ENCODE measurements at regions of chr9 and their contacts with region 1.

Region 1: DNA sequence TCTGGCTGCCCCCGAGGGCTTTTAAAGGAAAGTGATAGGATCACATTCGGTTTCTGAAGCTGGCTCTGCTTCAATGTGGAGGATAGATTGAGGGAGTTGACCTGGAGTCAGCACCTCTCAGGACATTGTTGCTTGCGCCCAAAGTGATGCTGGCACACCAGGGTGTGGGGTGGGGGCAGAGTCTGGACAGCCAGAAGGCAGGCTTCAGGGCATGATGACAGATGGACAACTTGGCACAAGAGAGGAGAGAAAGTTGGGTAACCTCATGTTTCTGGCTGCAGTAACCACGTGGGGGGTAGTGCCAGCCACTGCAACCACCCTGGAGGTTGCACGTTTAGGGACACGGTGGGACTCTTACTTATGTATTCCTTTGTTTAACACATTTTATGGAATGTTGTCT is 9.5 kb downstream of the ALDH1B1 start:
- DNase-seq: no peak
- H3K4me3 ChIP-seq: no peak overlapping the region
- H3K27me3 ChIP-seq: peaks cover 3% of the 10 kb centered on the region
- CTCF ChIP-seq: no peak

Region 2: DNA sequence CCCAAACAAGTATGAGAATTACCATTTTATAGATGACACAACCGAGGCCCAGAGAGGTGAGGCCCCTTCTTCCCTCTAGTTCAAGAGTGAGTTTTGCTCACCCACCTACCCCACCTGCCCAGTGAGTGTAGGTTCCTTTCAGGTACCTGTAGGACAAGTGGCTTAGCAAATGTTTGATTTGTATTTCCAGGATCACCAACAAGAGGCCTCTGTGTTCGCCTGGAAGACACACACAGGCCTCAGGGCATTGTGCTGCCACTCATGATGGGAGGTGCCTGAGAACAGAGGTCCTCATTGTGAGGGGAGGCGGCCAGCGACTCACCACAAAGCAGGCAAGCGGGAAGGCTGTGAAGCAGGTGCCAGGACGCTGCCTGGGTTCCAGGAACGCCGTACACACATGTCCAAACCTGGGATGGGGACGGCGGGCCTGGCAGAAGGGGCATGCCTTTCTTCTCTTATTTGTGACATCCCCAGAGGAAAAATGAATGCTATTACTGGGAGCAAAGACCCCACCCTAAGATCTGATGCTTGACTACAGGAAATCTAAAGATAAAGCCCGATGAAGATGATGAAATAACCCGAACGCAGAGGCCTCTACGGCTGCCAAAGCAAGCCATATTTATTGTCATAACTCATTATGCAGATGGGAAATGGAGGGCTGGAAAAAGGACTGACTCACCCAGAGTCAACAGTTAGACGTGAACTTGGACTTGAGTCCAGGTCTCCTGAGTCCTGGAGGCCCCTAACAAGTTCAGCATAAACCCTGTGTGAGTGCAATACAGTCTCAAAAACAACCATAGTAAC is 437.9 kb before region 1 on chr9:
- CTCF ChIA-PET with region 1: no interaction called
- POLR2A ChIA-PET with region 1: no interaction called
- DNase-seq: peak; percentile 44
- H3K4me3 ChIP-seq: no peak overlapping the region
- H3K27me3 ChIP-seq: no peaks in the 10 kb centered on the region
- CTCF ChIP-seq: no peak

Region 3: DNA sequence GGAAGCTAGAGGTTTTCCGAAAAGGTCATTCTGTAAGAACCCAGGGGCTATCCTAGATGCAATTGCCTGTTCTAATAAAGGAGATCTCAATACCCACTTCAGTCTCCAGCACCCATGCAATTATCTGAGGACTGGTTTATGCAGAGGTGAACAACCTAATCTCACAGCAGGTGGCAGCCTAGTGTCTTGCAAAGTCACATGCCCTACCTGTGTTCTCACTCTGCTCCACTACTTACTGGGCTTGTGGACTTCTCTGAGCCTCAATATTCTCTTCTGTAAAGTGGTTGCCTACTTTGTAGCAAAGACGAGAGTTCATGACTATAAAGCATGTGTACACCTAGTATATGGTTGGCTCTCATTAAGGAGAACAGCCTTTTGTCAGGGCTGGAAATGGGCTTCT is 30.5 kb before region 1 on chr9:
- CTCF ChIA-PET with region 1: interaction called, 21 read pairs
- POLR2A ChIA-PET with region 1: no interaction called
- DNase-seq: no peak
- H3K4me3 ChIP-seq: no peak overlapping the region
- H3K27me3 ChIP-seq: peaks cover 5% of the 10 kb centered on the region
- CTCF ChIP-seq: peak; percentile 29; the same call in 1 of the 2 replicates

Region 4: GRCh38 chr9:38467404-38467803 is 65.4 kb after region 1 on chr9:
- CTCF ChIA-PET with region 1: no interaction called
- POLR2A ChIA-PET with region 1: no interaction called
- DNase-seq: no peak
- H3K4me3 ChIP-seq: no peak overlapping the region
- H3K27me3 ChIP-seq: no peaks in the 10 kb centered on the region
- CTCF ChIP-seq: no peak

Measured in BJ (cell line).